ENCODE measurements at regions of chr12 and their contacts with region 1.

Region 1: GRCh38 chr12:11836282-11837151 is 187.0 kb downstream of the ETV6 start:
- DNase-seq: peak; percentile 85 to 97 (median 97)
- H3K4me3 ChIP-seq: peak overlapping the region in 4 of 7 experiments; percentile 19 to 40 (median 31)
- H3K27ac ChIP-seq: peak overlapping the region; percentile 72 to 85
- H3K4me1 ChIP-seq: peaks cover 34 to 95% (median 75%) of the 10 kb centered on the region in 4 experiments
- H3K27me3 ChIP-seq: no peaks in the 10 kb centered on the region

Region 2: GRCh38 chr12:11822081-11822834 is 14.3 kb before region 1 on chr12:
- CTCF ChIA-PET with region 1: interaction called, 11 read pairs
- POLR2A ChIA-PET with region 1: interaction called, 4 read pairs
- DNase-seq: peak; percentile 79 to 92 (median 87)
- H3K4me3 ChIP-seq: peak overlapping the region in 2 of 7 experiments; percentile 8 to 19
- H3K27ac ChIP-seq: peak overlapping the region; percentile 71 to 87
- H3K4me1 ChIP-seq: peaks cover 0 to 80% (median 44%) of the 10 kb centered on the region in 4 experiments
- H3K27me3 ChIP-seq: no peaks in the 10 kb centered on the region

Region 3: DNA sequence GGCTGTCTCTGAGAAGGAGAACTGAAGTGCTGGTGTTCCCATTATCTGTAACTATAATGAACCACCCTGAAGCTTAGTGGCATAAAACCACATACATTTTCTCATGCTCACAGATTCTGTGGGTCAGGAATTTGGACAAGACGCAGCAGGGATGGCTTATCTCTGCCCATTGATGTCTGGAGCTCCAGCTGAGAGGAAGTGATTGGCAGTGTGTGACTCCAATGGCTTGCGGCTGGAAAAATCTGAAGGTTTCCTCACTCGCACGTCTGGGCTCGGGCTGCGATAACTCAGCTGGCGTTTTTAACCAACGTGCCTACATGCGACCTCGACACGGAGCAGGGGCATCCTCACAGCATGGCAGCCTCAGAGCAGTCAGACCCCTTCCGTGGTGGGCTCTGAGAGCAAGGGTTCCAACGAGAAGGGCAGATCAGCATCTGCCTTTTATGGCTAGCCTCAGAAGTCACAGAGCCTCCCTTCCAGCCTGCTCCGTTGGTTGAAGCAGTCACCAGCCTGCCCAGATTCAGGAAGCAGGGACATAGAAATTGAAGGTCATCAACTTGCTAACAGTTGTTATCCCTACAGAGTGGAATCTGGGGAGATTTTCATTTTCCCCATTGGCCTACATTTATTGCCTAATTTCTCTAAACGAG is 90.9 kb after region 1 on chr12:
- CTCF ChIA-PET with region 1: no interaction called
- POLR2A ChIA-PET with region 1: no interaction called
- DNase-seq: peak; percentile 18 to 69 (median 47)
- H3K4me3 ChIP-seq: no peak overlapping the region
- H3K27ac ChIP-seq: no peak overlapping the region
- H3K4me1 ChIP-seq: no peaks in the 10 kb centered on the region
- H3K27me3 ChIP-seq: no peaks in the 10 kb centered on the region